ENCODE measurements at regions of chr10 and their contacts with region 1.

Region 1: GRCh38 chr10:6542999-6543430 is 37.1 kb downstream of the PRKCQ start:
- DNase-seq: peak; percentile 64
- H3K4me3 Mint-ChIP-seq: peak overlapping the region; percentile 86
- H3K27ac Mint-ChIP-seq: peak overlapping the region; percentile 99
- H3K4me1 Mint-ChIP-seq: peaks cover 74% of the 10 kb centered on the region
- H3K27me3 Mint-ChIP-seq: no peaks in the 10 kb centered on the region

Region 2: GRCh38 chr10:6144406-6145165 is 398.4 kb before region 1 on chr10:
- intact Hi-C with region 1: loop called (anchors 2 kb)
- DNase-seq: peak; percentile 89
- H3K4me3 Mint-ChIP-seq: peak overlapping the region; percentile 85
- H3K27ac Mint-ChIP-seq: peak overlapping the region; percentile 86
- H3K4me1 Mint-ChIP-seq: peaks cover 82% of the 10 kb centered on the region
- H3K27me3 Mint-ChIP-seq: no peaks in the 10 kb centered on the region

Region 3: GRCh38 chr10:6445501-6446316 is 97.3 kb before region 1 on chr10:
- intact Hi-C with region 1: loop called (anchors 1 kb)
- DNase-seq: peak; percentile 30
- H3K4me3 Mint-ChIP-seq: no peak overlapping the region
- H3K27ac Mint-ChIP-seq: peak overlapping the region; percentile 36
- H3K4me1 Mint-ChIP-seq: peaks cover 34% of the 10 kb centered on the region
- H3K27me3 Mint-ChIP-seq: no peaks in the 10 kb centered on the region

Region 4: DNA sequence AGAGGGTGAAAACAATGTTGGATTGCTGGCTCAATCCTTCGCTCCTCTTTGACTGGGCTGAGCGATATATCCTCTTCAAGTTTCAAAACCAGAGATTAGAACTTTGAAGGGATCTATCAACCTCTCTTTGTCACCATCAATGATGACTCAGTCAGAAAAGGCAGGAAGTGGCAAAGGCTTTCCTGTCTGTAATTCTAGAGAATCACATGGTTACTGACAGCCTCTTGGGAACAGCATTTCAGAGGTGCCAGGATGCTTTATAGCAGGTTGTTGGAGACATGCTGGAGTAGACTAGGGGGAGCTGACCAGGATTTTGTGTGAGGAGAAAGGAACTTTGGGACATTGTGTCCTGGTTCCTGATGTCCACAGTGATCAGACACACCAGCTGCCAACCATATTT is 44.2 kb before region 1 on chr10:
- intact Hi-C with region 1: loop called (anchors 1 kb)
- DNase-seq: peak; percentile 63
- H3K4me3 Mint-ChIP-seq: peak overlapping the region; percentile 68
- H3K27ac Mint-ChIP-seq: peak overlapping the region; percentile 88
- H3K4me1 Mint-ChIP-seq: peaks cover 44% of the 10 kb centered on the region
- H3K27me3 Mint-ChIP-seq: no peaks in the 10 kb centered on the region

Region 5: DNA sequence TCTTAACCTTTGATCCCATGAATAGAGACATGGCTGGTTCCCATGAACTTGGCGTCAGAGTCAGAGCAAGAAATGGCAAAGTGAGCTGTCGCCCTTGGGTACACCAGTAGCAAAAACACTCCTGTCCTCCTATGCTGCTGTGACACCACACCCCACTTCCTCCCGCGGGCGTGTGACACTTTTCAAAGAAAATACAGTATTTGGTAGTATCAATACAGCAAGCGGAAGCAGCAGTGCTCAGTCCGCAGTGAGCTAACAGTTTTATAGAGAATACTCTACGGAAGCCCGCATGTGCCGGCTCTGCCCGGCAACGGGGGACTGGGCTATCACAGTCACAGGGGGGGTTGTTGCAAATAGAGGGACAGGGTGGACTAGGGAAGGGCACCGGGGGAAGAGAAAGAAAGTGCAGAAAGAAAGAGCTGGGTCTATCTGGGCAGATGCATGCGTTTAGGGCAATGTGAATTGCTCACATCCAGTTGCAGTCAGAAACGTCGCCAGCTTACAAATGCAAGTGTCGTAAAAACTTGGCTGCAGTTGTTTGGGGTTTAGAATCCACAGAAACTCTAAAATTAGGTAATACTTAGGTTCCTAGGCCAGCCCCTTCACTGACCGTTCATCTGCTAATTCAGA is 12.7 kb before region 1 on chr10:
- intact Hi-C with region 1: loop called (anchors 1 kb)
- DNase-seq: peak; percentile 78
- H3K4me3 Mint-ChIP-seq: peak overlapping the region; percentile 80
- H3K27ac Mint-ChIP-seq: peak overlapping the region; percentile 99
- H3K4me1 Mint-ChIP-seq: peaks cover 75% of the 10 kb centered on the region
- H3K27me3 Mint-ChIP-seq: no peaks in the 10 kb centered on the region

Region 6: DNA sequence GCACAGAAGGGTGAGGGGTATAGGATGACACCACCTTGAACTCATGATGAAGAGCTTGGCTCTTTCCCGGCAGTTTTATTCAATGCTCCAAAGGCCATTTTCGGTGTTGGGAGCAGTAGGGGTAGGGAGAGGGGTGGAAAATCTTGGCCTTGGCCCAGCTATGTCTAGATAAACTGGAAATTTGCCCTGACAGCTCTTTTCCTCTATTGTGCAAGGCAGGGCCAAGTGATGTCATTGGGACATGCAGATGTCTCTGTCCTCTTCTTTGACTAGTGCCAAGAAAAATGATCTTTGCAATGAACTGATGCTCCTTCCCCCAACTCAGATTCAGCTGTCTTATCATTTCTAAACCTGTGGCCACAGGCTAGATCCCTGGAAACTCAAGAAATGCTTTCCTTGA is 64.8 kb after region 1 on chr10:
- intact Hi-C with region 1: loop called (anchors 2 kb)
- DNase-seq: no peak
- H3K4me3 Mint-ChIP-seq: no peak overlapping the region
- H3K27ac Mint-ChIP-seq: peak overlapping the region; percentile 69
- H3K4me1 Mint-ChIP-seq: peaks cover 91% of the 10 kb centered on the region
- H3K27me3 Mint-ChIP-seq: no peaks in the 10 kb centered on the region

Measured in activated T-helper 1 cell treated with anti-CD3 and anti-CD28 coated beads, Interleukin-12 subunit alpha, Interleukin-12 subunit beta, Interleukin-2, Interleukin-4 antibody, amounts not matched to agents 30 ng/mL and 10 ng/mL and 1 ng/mL, durations not matched to agents 14 hours and 24 hours and 36 hours (primary cell).